Common myeloid progenitor, CD34-positive (primary cell): ENCODE measurements at regions of chr1 and their contacts with region 1.

Region 1: DNA sequence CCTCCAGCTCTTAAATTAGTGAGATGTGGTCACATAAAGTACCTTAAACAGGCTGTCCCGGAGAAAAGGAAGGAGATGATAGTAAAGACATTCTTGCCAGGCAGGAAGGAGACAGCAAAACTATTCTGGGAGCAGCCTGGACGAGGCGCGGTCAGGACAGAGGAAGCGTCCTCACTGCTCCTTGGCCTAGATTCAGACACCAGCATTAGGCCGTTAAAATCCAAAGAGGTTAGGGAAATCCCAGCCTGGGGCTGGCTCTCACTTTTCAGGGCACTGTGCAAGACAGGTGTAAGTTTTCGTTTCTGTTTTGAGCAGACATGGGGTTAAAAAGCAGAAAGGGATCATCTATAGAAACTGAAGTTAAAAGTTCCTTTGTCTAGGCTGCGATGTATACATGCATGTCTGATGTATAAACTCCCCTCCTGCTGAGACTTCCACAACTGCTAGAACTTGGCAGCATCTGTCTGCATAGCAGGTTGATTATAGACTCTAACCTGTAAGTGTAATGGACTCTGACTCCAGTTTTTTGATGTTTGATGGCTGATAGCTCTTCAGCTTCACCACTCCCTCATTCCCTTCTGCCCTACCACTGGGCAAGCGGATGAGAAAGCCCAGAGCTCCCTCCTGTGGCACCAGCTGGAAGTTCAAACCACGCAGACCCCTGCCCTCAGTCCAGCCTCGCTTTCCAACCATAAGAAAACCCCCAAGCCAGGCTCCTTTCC is 21.5 kb downstream of the STPG1 start:
- DNase-seq: peak; percentile 53 to 67 (median 67)
- H3K4me3 ChIP-seq: peak overlapping the region in 1 of 7 experiments; percentile 11
- H3K27ac ChIP-seq: no peak overlapping the region
- H3K4me1 ChIP-seq: peaks cover 0 to 9% (median 2%) of the 10 kb centered on the region in 4 experiments
- H3K27me3 ChIP-seq: no peaks in the 10 kb centered on the region

Region 2: DNA sequence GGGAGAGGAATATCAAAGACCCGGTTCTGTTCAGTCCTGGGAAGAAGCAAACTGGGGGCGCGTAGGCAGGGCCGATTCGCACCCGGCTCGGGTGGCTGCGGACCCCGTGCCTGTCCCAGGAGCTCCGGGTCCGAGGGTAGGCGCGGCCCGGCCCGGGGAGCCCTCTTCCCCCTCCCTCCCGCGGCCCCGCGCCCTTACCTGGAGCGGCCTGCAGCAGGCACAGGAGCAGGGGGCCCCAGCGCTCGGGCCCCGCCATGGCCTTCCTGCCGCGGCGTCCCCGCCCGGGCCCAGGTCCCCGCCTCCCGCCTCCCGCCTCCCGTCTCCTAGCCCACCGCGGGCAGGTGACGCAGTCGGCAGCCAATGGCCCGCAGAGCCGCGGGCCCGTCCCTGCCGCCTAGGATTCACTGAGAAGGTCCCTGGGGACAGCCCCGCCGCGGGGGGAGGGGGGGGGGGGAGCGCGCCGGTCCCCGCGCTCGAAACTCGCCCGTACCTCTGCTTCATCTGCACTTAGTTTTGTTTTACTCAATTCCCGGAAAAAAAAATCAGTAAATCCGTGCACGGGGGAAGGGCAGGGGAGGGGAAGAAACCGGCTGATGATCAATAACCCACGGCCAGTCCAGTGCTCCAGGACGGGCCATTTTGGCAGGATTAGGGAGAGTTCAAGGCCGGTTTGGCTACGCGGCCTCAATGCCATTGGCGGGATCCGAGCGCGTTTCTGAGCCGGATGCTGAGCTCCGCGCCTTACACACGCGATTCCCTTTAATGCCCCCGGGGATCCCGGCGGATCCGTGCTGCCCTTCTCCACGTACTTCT is 204.8 kb before region 1 on chr1 and contains the start of gene IFNLR1:
- CTCF ChIA-PET with region 1: interaction called, 30 read pairs
- POLR2A ChIA-PET with region 1: no interaction called
- DNase-seq: peak in 2 of 3 donors; percentile 24 to 41
- H3K4me3 ChIP-seq: peak within 1 kb of the TSS in 6 of 7 experiments; percentile 34 to 72 (median 48)
- H3K27ac ChIP-seq: no peak within 1 kb of the TSS
- H3K4me1 ChIP-seq: peaks cover 8 to 26% (median 21%) of the 10 kb centered on the region in 4 experiments
- H3K27me3 ChIP-seq: peaks cover 0 to 44% (median 23%) of the 10 kb centered on the region in 5 experiments

Region 3: GRCh38 chr1:24321697-24322469 is 70.2 kb before region 1 on chr1:
- CTCF ChIA-PET with region 1: interaction called, 20 read pairs
- POLR2A ChIA-PET with region 1: no interaction called
- DNase-seq: peak; percentile 80 to 94 (median 93)
- H3K4me3 ChIP-seq: peak overlapping the region; percentile 18 to 71 (median 56)
- H3K27ac ChIP-seq: no peak overlapping the region
- H3K4me1 ChIP-seq: peaks cover 12 to 49% (median 36%) of the 10 kb centered on the region in 4 experiments
- H3K27me3 ChIP-seq: peaks cover 6 to 90% (median 40%) of the 10 kb centered on the region in 5 experiments

Region 4: GRCh38 chr1:24331961-24332673 is 59.9 kb before region 1 on chr1:
- CTCF ChIA-PET with region 1: no interaction called
- POLR2A ChIA-PET with region 1: no interaction called
- DNase-seq: no peak
- H3K4me3 ChIP-seq: no peak overlapping the region
- H3K27ac ChIP-seq: no peak overlapping the region
- H3K4me1 ChIP-seq: peaks cover 0 to 7% (median 0%) of the 10 kb centered on the region in 4 experiments
- H3K27me3 ChIP-seq: peaks cover 0 to 4% (median 0%) of the 10 kb centered on the region in 5 experiments

Region 5: DNA sequence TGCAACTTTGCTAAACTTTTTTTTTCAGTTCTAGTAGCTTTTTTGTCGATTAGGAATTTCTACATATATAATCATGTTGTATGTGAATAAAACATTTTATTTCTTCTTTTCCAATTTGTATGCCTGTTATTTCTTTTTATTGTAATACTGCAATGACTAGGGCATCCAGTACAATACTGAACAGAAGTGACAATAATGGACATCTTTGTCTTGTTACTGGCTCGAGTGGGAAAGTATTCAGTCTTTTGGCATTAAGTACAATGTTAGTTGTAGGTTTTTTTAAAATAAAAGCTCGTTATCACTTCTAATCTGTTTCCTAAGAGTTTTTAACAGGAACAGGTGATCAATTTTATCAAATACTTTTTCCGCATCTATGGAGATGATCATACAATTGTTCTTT is 11.8 kb after region 1 on chr1:
- CTCF ChIA-PET with region 1: interaction called, 11 read pairs
- POLR2A ChIA-PET with region 1: no interaction called
- DNase-seq: no peak
- H3K4me3 ChIP-seq: no peak overlapping the region
- H3K27ac ChIP-seq: no peak overlapping the region
- H3K4me1 ChIP-seq: no peaks in the 10 kb centered on the region
- H3K27me3 ChIP-seq: no peaks in the 10 kb centered on the region

Region 6: GRCh38 chr1:24415334-24415909 is 23.4 kb after region 1 on chr1 and contains the start of gene NIPAL3:
- CTCF ChIA-PET with region 1: interaction called, 16 read pairs
- POLR2A ChIA-PET with region 1: no interaction called
- DNase-seq: peak; percentile 99 to 100 (median 100)
- H3K4me3 ChIP-seq: peak within 1 kb of the TSS; percentile 83 to 92 (median 86)
- H3K27ac ChIP-seq: peak within 1 kb of the TSS in 1 of 2 experiments; percentile 75
- H3K4me1 ChIP-seq: peaks cover 20 to 55% (median 46%) of the 10 kb centered on the region in 4 experiments
- H3K27me3 ChIP-seq: no peaks in the 10 kb centered on the region